Spleen (tissue), 13 donors: ENCODE measurements at regions of chr5 and their contacts with region 1.

Region 1: GRCh38 chr5:9207817-9208418 is 338.0 kb downstream of the SEMA5A start:
- DNase-seq: no peak
- H3K4me3 ChIP-seq: no peak overlapping the region
- H3K27ac ChIP-seq: no peak overlapping the region
- H3K4me1 ChIP-seq: no peaks in the 10 kb centered on the region
- H3K27me3 ChIP-seq: no peaks in the 10 kb centered on the region
- CTCF ChIP-seq: peak in 7 of 11 experiments; percentile 28 to 59 (median 43)
- POLR2A ChIP-seq: no peak

Region 2: DNA sequence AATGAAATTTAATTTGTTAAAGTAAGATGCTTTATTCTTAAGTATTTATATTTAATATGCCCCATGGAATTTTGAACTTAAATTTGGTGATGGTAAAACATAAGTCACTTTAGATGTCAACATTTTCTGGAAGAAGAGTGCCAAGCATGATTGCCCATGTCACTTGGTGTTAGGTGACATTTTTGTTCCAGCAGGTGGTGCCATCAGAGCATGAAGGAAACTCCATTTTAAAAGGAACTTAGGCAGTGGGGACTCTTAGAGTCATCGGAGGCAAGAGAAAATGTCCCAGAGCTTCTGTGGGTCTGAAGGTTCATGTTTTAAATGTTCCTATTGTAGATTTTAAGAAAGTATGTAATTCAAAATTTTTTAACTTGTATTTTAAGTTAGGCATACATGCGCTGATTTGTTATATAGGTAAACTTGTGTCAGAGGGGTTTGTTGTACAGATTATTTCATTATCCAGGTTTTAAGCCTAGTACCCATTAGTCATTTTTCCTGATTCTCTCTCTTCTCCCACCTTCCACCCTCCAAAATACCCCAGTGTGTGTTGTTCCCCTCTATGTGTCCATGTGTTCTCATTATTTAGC is 451.3 kb before region 1 on chr5:
- intact Hi-C with region 1: loop called (anchors 5 kb)
- DNase-seq: no peak
- H3K4me3 ChIP-seq: no peak overlapping the region
- H3K27ac ChIP-seq: no peak overlapping the region
- H3K4me1 ChIP-seq: no peaks in the 10 kb centered on the region
- H3K27me3 ChIP-seq: no peaks in the 10 kb centered on the region
- CTCF ChIP-seq: peak in 6 of 11 experiments; percentile 29 to 44 (median 39)
- POLR2A ChIP-seq: no peak

Region 3: GRCh38 chr5:9284781-9285307 is 76.9 kb after region 1 on chr5:
- intact Hi-C with region 1: no loop called
- DNase-seq: no peak
- H3K4me3 ChIP-seq: no peak overlapping the region
- H3K27ac ChIP-seq: peak overlapping the region in 5 of 8 donors; percentile 9 to 61 (median 31)
- H3K4me1 ChIP-seq: no peaks in the 10 kb centered on the region
- H3K27me3 ChIP-seq: no peaks in the 10 kb centered on the region
- CTCF ChIP-seq: no peak
- POLR2A ChIP-seq: no peak

Region 4: DNA sequence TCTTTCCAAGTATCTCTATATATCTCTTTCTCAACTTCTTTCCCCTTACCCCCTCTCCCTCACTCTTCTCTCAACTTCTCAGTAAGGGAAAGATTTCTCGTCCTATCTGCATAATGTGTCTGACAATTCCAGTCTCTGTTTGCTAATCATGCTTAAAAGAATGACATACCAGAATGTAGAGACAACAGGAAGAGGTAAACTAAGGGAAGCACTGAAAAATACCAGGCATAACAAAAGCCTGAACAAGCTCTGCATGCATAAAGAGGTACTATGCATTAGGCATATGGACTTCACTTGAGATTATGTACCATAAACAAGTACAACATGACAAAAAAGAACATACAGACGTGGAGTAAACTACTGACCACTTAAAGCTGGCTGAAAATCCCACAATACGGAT is 275.3 kb after region 1 on chr5:
- intact Hi-C with region 1: no loop called
- DNase-seq: no peak
- H3K4me3 ChIP-seq: no peak overlapping the region
- H3K27ac ChIP-seq: no peak overlapping the region
- H3K4me1 ChIP-seq: no peaks in the 10 kb centered on the region
- H3K27me3 ChIP-seq: no peaks in the 10 kb centered on the region
- CTCF ChIP-seq: no peak
- POLR2A ChIP-seq: no peak

Region 5: DNA sequence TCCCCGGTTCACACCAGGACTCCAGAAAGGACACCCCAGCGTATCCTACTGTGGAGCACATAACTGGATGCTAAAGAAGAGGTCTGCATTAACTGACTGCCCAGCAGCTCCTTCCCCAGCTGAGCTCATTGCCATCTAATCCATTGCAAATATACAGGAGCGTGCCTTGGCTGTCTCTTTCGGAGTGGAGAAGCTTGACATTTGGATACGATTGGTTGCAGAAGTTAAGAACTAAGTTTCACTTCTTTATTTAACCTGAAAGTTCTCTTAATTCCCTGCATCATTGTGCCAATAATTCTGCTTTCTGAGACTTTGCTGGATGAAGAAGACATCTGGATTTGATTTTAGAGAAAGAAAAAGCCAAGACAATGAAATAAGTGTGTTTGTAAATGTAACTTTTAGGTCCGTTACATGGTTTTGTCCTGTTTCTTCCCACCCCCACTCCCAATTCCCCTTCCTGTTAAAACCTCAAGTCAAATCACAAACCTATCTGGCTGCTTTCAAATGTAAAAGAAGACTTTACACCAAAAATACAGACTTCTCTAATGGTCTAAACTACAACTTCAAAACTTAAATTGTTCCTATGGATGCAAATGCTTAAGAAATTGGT is 388.4 kb after region 1 on chr5:
- intact Hi-C with region 1: no loop called
- DNase-seq: no peak
- H3K4me3 ChIP-seq: no peak overlapping the region
- H3K27ac ChIP-seq: no peak overlapping the region
- H3K4me1 ChIP-seq: no peaks in the 10 kb centered on the region
- H3K27me3 ChIP-seq: no peaks in the 10 kb centered on the region
- CTCF ChIP-seq: no peak
- POLR2A ChIP-seq: no peak